A673 (cell line): ENCODE measurements at regions of chr3 and their contacts with region 1.

Region 1: GRCh38 chr3:157865352-157866000 is 240.7 kb downstream of the SHOX2 start:
- DNase-seq: peak; percentile 59
- H3K4me3 ChIP-seq: no peak overlapping the region
- H3K27ac ChIP-seq: no peak overlapping the region
- H3K4me1 ChIP-seq: no peaks in the 10 kb centered on the region
- H3K27me3 ChIP-seq: no peaks in the 10 kb centered on the region
- CTCF ChIP-seq: peak; percentile 89

Region 2: GRCh38 chr3:157290766-157291165 is 574.7 kb before region 1 on chr3:
- CTCF ChIA-PET with region 1: no interaction called
- POLR2A ChIA-PET with region 1: no interaction called
- intact Hi-C with region 1: no loop called
- DNase-seq: peak; percentile 78
- H3K4me3 ChIP-seq: no peak overlapping the region
- H3K27ac ChIP-seq: peak overlapping the region; percentile 67
- H3K4me1 ChIP-seq: peaks cover 44% of the 10 kb centered on the region
- H3K27me3 ChIP-seq: no peaks in the 10 kb centered on the region
- CTCF ChIP-seq: no peak

Region 3: DNA sequence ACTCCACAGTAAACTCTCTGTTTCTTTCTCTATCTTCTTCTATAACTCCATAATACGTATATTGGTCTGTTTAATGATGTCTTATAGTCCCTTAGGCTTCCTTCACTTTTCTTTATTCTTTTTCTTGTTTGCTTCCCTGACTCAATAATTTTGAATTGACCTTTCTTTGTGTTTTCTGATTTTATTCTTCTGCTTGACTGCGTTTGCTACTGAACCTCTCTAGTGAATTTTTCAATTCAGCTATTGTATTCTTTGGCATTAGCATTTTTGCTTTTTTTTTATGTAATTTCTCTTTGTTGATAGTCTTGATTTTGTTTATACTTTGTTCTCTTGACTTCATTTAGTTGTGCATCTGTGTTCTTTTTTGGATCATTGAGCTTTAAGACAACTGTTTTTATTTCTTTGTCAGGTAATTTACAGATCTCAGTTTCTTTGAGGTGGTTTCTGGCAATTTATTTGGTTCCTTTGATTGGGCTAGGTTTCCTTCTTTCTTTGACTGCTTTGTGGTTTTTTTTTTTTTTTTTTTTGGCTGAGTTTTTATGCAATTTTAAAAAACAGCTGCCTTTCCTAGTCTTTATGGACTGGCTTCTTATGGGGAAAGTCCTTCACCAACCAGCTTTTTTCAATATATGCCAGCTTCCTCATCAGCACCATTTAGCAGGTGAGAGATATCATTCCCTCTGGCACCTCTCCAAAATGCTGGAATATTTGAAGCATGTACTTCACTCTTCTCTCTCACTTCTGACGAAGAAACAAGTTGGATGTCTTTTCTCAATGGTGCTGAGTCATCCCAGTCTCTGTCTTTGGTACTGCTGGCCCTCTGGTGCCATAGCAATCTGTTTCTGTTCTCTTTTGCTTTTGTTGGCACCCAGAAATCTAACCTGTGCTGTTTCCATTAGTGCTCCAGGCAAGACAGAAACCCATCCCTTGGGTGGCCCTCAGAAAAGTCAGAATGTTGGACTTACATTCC is 262.1 kb after region 1 on chr3:
- CTCF ChIA-PET with region 1: no interaction called
- POLR2A ChIA-PET with region 1: no interaction called
- intact Hi-C with region 1: no loop called
- DNase-seq: no peak
- H3K4me3 ChIP-seq: no peak overlapping the region
- H3K27ac ChIP-seq: no peak overlapping the region
- H3K4me1 ChIP-seq: no peaks in the 10 kb centered on the region
- H3K27me3 ChIP-seq: no peaks in the 10 kb centered on the region
- CTCF ChIP-seq: no peak

Region 4: GRCh38 chr3:158313338-158313927 is 448.0 kb after region 1 on chr3:
- CTCF ChIA-PET with region 1: no interaction called
- POLR2A ChIA-PET with region 1: interaction called, 3 read pairs
- intact Hi-C with region 1: loop called (anchors 2 kb)
- DNase-seq: peak; percentile 64
- H3K4me3 ChIP-seq: no peak overlapping the region
- H3K27ac ChIP-seq: no peak overlapping the region
- H3K4me1 ChIP-seq: no peaks in the 10 kb centered on the region
- H3K27me3 ChIP-seq: no peaks in the 10 kb centered on the region
- CTCF ChIP-seq: peak; percentile 71

Region 5: GRCh38 chr3:158434412-158435038 is 569.0 kb after region 1 on chr3:
- CTCF ChIA-PET with region 1: no interaction called
- POLR2A ChIA-PET with region 1: no interaction called
- intact Hi-C with region 1: loop called (anchors 2 kb)
- DNase-seq: peak; percentile 80
- H3K4me3 ChIP-seq: no peak overlapping the region
- H3K27ac ChIP-seq: no peak overlapping the region
- H3K4me1 ChIP-seq: peaks cover 11% of the 10 kb centered on the region
- H3K27me3 ChIP-seq: no peaks in the 10 kb centered on the region
- CTCF ChIP-seq: peak; percentile 82

Region 6: DNA sequence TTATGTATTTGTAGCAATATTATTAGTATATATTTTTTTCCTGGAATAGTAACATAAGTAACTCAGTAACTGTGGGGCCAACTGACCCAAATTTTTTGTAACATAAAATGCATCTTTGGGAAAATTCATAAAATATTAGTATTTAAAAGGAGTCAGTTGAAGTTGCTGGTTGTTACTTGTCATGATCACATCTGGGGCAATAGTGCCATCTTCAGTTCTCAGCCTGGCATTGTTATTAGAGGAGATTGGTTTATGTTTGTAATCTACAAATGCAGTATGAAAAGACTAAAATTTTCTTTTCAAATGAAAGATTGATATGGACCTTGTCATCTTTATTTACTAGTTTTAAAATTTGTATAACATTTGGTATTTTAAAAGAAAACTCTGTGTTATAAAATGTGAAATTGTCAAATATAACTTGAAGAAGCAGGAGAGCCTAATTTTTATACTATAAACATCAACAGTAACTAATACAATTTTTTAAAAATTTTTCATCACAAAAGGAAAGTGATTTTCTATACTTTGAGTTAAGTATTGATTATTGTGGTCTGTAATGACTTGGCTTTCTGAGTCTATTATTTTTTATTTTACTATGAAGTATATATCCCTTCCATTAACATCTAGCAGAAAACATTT is 666.7 kb after region 1 on chr3:
- CTCF ChIA-PET with region 1: no interaction called
- POLR2A ChIA-PET with region 1: no interaction called
- intact Hi-C with region 1: loop called (anchors 5 kb)
- DNase-seq: peak; percentile 63
- H3K4me3 ChIP-seq: no peak overlapping the region
- H3K27ac ChIP-seq: no peak overlapping the region
- H3K4me1 ChIP-seq: peaks cover 4% of the 10 kb centered on the region
- H3K27me3 ChIP-seq: no peaks in the 10 kb centered on the region
- CTCF ChIP-seq: peak; percentile 77